Ascending aorta (tissue), 2 donors: ENCODE measurements at regions of chr10 and their contacts with region 1.

Region 1: DNA sequence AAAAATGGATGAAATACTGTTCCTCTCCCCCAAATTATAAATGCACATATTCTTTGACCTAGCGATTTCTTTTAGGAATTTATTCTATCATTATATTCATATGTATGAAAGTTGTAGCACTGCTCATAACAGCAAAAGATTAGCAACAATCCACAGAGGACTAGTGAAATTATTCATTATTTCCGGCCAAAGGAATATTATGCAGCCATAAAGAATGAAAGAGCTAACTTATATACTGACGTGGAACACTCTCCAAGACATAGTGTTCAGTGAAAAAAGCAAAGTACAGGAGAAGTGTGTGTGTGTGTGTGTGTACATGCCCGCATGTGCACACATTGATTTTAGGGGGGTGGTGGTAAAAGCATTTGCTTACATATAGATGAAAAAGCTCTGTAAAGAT is 23.3 kb downstream of the MMS19 start:
- DNase-seq: no peak
- H3K4me3 ChIP-seq: no peak overlapping the region
- H3K27ac ChIP-seq: no peak overlapping the region
- H3K4me1 ChIP-seq: no peaks in the 10 kb centered on the region
- H3K27me3 ChIP-seq: no peaks in the 10 kb centered on the region
- CTCF ChIP-seq: no peak

Region 2: GRCh38 chr10:97511711-97512440 is 37.0 kb after region 1 on chr10:
- intact Hi-C with region 1: loop called (anchors 5 kb)
- DNase-seq: no peak
- H3K4me3 ChIP-seq: no peak overlapping the region
- H3K27ac ChIP-seq: no peak overlapping the region
- H3K4me1 ChIP-seq: peaks cover 0 to 10% of the 10 kb centered on the region in 2 donors
- H3K27me3 ChIP-seq: no peaks in the 10 kb centered on the region
- CTCF ChIP-seq: no peak